GM10248 (cell line): ENCODE measurements at regions of chr1 and their contacts with region 1.

Region 1: DNA sequence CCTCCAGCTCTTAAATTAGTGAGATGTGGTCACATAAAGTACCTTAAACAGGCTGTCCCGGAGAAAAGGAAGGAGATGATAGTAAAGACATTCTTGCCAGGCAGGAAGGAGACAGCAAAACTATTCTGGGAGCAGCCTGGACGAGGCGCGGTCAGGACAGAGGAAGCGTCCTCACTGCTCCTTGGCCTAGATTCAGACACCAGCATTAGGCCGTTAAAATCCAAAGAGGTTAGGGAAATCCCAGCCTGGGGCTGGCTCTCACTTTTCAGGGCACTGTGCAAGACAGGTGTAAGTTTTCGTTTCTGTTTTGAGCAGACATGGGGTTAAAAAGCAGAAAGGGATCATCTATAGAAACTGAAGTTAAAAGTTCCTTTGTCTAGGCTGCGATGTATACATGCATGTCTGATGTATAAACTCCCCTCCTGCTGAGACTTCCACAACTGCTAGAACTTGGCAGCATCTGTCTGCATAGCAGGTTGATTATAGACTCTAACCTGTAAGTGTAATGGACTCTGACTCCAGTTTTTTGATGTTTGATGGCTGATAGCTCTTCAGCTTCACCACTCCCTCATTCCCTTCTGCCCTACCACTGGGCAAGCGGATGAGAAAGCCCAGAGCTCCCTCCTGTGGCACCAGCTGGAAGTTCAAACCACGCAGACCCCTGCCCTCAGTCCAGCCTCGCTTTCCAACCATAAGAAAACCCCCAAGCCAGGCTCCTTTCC is 21.5 kb downstream of the STPG1 start:
- DNase-seq: peak; percentile 78
- CTCF ChIP-seq: peak; percentile 84

Region 2: GRCh38 chr1:24209090-24209489 is 183.0 kb before region 1 on chr1:
- CTCF ChIA-PET with region 1: interaction called, 65 read pairs
- POLR2A ChIA-PET with region 1: no interaction called
- DNase-seq: no peak
- CTCF ChIP-seq: no peak

Region 3: GRCh38 chr1:24321697-24322469 is 70.2 kb before region 1 on chr1:
- CTCF ChIA-PET with region 1: interaction called, 12 read pairs
- POLR2A ChIA-PET with region 1: no interaction called
- DNase-seq: peak; percentile 83
- CTCF ChIP-seq: peak; percentile 6

Region 4: GRCh38 chr1:24373044-24373443 is 19.0 kb before region 1 on chr1:
- CTCF ChIA-PET with region 1: interaction called, 40 read pairs
- POLR2A ChIA-PET with region 1: no interaction called
- DNase-seq: peak; percentile 68
- CTCF ChIP-seq: no peak

Region 5: DNA sequence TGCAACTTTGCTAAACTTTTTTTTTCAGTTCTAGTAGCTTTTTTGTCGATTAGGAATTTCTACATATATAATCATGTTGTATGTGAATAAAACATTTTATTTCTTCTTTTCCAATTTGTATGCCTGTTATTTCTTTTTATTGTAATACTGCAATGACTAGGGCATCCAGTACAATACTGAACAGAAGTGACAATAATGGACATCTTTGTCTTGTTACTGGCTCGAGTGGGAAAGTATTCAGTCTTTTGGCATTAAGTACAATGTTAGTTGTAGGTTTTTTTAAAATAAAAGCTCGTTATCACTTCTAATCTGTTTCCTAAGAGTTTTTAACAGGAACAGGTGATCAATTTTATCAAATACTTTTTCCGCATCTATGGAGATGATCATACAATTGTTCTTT is 11.8 kb after region 1 on chr1:
- CTCF ChIA-PET with region 1: interaction called, 41 read pairs
- POLR2A ChIA-PET with region 1: no interaction called
- DNase-seq: no peak
- CTCF ChIP-seq: no peak

Region 6: DNA sequence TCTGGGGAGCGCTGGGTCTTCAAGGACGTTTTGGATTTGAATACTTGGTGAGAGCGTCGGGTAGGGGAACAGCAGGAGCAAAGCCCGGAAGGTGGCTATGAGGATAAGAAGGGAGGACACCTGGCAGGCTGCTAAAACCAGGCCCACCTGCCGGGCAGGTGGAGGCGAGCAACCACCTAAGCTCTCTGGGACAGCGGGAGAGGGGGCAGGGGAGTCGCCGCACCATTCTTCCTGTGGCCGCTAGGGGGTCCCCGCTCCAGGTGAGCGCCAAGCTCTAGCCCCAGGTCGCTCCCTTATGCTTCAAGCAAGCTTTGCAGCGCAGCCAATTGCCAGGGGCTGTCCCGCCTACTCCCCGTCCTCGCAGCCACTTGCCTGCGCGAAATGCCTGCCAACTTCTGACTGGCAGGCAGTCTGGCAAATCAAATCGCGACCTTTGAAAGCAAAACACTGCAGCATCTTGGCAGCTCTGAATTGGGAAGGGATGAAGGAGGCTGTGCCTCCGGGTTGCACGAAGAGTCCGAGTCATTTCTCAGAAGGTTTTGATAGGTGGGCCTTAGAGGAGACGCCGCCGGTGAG is 23.4 kb after region 1 on chr1 and contains the start of gene NIPAL3:
- CTCF ChIA-PET with region 1: interaction called, 99 read pairs
- POLR2A ChIA-PET with region 1: no interaction called
- DNase-seq: peak; percentile 97
- CTCF ChIP-seq: peak; percentile 85

Region 7: DNA sequence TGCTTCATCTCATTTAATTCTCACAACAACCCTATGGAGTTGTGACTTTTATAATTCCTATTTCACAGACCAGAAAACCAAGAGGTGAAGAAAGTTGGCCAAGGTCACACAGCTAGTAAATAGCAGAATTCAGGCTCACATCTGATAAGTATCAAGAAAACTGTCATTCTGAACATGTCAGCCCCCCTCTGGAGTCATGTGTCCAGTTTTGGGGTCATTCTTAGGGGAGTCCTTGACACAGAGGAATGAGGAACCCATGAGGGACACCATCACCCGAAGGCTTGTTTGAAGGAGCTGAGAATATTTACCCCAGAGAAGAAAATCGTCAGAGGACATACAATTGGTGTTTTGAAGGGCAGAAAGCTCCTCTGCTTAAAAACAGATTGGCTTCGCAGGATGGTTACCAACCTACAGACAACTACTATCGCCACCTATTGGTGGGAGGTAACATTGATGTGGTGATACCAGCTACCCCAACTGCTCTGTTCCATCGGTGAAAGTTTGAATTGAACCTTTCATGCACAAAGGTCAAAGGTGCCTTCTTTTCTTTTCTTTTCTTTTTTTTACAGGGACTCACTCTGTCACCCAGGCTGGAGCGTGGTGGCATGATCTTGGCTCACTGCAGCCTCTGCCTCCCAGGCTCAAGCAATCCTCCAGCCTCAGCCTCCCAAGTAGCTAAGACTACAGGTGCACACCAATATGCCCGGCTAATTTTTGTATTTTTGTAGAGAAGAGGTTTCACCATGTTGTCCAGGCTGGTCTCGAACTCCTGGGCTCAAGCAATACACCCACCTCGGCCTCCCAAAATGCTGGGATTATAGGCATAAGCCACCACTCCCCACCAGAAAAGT is 195.2 kb after region 1 on chr1:
- CTCF ChIA-PET with region 1: interaction called, 12 read pairs
- POLR2A ChIA-PET with region 1: no interaction called
- DNase-seq: peak; percentile 79
- CTCF ChIP-seq: peak; percentile 68